Psoas muscle (tissue), 8 donors: ENCODE measurements at regions of chr6 and their contacts with region 1.

Region 1: DNA sequence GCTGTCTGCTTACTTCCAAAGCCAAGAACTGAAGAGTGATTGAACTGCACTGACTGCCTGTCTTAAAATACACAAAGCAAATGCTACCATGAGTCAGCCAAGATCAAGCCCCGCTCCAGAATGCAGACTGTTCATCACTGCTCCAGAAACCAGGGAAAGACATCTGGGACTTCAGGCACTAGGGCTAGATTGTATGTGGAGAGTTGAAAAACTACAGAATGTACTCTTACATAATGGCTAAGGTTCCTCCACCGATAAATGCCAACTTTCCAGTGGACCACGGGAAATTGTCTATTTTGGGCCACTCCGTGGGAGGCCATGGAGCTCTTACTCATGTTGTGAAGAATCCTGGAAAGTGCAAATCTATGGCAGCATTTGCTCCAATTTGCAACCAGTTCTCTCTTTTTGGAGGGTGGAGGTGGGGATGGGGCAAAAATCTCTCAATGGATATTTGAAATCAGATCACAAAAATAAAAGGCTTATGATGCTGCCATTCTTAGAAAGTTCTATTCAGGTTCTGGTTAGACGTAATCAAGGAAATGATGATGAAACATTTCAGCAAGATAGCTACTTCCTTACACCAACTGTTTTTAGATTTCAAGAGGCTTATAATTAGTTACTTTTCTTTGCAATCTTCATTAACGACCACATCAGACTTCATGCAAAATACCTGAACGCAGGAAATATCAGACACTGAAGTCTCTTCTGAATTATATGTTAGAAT is 11.8 kb upstream of the CAP2 start:
- DNase-seq: peak; percentile 34 to 65
- ATAC-seq: peak; percentile 88 to 94 (median 92)
- H3K4me3 ChIP-seq: peak overlapping the region; percentile 6
- H3K27ac ChIP-seq: peak overlapping the region; percentile 95
- H3K4me1 ChIP-seq: peaks cover 31% of the 10 kb centered on the region
- H3K27me3 ChIP-seq: no peaks in the 10 kb centered on the region
- CTCF ChIP-seq: no peak

Region 2: DNA sequence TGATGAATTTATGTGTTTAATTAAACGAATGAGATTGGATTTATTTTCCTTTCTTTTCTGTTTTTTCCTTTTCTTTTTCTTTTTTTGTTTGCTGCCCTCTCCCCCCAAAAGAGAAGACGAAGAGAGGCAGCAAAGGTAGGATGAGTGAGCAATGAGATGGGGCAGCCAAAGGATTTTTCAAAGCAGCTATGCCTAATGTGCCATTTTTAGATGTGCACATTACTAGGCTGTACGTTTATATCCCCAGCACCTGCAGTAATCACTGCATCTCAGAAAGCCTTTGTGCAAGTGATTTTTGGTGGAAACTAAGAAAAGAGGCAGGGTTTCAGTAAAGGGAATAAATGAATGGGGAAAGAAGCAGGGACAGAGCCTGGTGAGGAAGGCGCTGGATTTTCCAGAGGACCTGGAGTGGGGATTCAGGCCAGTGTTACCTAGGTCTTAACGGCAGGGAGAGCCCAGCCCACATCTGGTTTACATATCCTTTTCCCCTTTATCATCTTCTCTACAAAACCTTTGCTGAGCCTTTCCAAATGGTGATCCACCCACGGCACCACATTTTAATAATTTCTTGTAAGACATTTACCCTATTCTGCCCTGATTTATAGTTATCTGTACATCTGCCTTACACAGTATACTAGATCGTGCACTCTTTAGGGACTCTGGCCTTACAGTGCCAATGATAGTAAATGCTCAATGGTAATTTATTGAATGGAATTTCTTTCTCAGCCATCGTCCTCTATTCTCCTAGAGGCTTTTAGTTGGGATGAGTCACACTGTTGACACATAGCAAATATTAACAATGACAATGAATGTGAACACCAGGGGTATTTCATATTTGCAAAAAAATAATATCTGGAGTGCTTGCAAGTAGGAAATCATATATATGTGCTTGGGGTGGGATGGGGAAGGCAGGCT is 582.0 kb before region 1 on chr6:
- intact Hi-C with region 1: no loop called
- DNase-seq: no peak
- ATAC-seq: peak in 2 of 4 donors; percentile 50 to 55
- H3K4me3 ChIP-seq: no peak overlapping the region
- H3K27ac ChIP-seq: no peak overlapping the region
- H3K4me1 ChIP-seq: peaks cover 13% of the 10 kb centered on the region
- H3K27me3 ChIP-seq: no peaks in the 10 kb centered on the region
- CTCF ChIP-seq: no peak

Region 3: GRCh38 chr6:17200395-17200794 is 181.2 kb before region 1 on chr6:
- intact Hi-C with region 1: loop called in 1 of 2 experiments (anchors 10 kb)
- DNase-seq: no peak
- ATAC-seq: no peak
- H3K4me3 ChIP-seq: no peak overlapping the region
- H3K27ac ChIP-seq: peak overlapping the region; percentile 99
- H3K4me1 ChIP-seq: peaks cover 34% of the 10 kb centered on the region
- H3K27me3 ChIP-seq: no peaks in the 10 kb centered on the region
- CTCF ChIP-seq: no peak

Region 4: GRCh38 chr6:17311595-17312311 is 69.8 kb before region 1 on chr6:
- intact Hi-C with region 1: loop called in 1 of 2 experiments (anchors 5 kb)
- DNase-seq: peak; percentile 64 to 85
- ATAC-seq: peak; percentile 94 to 97 (median 95)
- H3K4me3 ChIP-seq: peak overlapping the region; percentile 61
- H3K27ac ChIP-seq: peak overlapping the region; percentile 95
- H3K4me1 ChIP-seq: peaks cover 3% of the 10 kb centered on the region
- H3K27me3 ChIP-seq: no peaks in the 10 kb centered on the region
- CTCF ChIP-seq: no peak

Region 5: DNA sequence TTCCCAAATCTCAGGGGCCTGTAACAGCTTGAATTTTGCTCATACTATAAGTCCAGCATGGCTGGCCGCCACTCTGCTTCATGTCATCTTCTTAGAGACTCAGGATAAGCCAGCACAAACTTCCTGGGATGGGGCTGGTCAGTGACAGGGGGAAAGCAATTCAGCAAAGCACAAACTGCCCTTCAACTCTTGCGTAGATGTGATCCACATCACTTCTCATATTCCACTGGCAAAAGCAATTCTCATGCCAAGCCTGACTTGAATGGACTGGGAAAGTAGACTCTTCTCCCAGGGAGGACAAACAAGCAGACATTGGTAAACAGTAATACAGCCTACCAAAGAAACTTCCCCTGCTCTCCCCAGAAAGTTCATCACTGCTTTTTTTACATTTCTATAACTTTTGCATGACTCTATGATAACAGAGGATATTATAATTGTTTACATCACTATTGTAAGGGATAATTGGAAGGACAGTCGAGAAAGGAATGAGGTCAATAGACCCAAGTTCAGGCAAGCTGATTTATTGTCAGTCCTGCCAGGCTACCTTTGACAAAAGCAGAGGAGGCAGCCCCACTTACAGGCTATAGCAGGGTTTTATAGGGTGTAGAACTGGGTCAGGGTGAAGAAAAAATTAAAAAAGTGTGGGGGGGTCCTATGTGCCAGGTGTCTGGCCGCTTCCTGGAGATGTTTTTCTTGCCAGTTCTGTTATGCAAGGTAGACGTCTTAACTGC is 63.0 kb before region 1 on chr6:
- intact Hi-C with region 1: loop called (anchors 2 to 5 kb)
- DNase-seq: peak; percentile 57 to 72
- ATAC-seq: peak; percentile 94 to 96 (median 96)
- H3K4me3 ChIP-seq: peak overlapping the region; percentile 11
- H3K27ac ChIP-seq: peak overlapping the region; percentile 95
- H3K4me1 ChIP-seq: peaks cover 18% of the 10 kb centered on the region
- H3K27me3 ChIP-seq: no peaks in the 10 kb centered on the region
- CTCF ChIP-seq: no peak

Region 6: DNA sequence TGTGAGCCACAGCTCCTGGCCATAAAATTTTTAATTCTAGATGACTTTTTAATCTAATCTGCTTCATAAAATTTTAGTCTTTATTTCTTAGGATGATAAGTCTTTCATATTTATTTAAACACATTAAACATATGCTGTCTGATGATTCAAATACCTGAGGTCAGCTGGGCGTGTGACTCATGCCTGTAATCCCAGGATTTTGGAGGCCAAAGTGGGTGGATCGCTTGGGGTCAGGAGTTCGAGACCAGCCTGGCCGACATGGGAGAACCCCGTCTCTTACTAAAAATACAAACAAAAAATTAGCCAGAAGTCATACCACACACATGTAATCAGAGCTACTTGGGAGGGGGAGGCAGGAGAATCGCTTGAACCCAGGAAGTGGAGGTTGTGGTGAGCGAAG is 47.3 kb before region 1 on chr6:
- intact Hi-C with region 1: no loop called
- DNase-seq: no peak
- ATAC-seq: no peak
- H3K4me3 ChIP-seq: no peak overlapping the region
- H3K27ac ChIP-seq: no peak overlapping the region
- H3K4me1 ChIP-seq: no peaks in the 10 kb centered on the region
- H3K27me3 ChIP-seq: no peaks in the 10 kb centered on the region
- CTCF ChIP-seq: no peak

Region 7: GRCh38 chr6:17505062-17505476 is 123.5 kb after region 1 on chr6:
- intact Hi-C with region 1: no loop called
- DNase-seq: no peak
- ATAC-seq: peak; percentile 38 to 46 (median 40)
- H3K4me3 ChIP-seq: no peak overlapping the region
- H3K27ac ChIP-seq: peak overlapping the region; percentile 56
- H3K4me1 ChIP-seq: peaks cover 16% of the 10 kb centered on the region
- H3K27me3 ChIP-seq: no peaks in the 10 kb centered on the region
- CTCF ChIP-seq: peak; percentile 17